ENCODE measurements at regions of chr6 and their contacts with region 1.

Region 1: GRCh38 chr6:168895102-168895812 is 358.4 kb downstream of the THBS2 start:
- DNase-seq: peak; percentile 93
- H3K4me3 ChIP-seq: no peak overlapping the region
- H3K27ac ChIP-seq: peak overlapping the region; percentile 36
- H3K4me1 ChIP-seq: no peaks in the 10 kb centered on the region
- H3K27me3 ChIP-seq: no peaks in the 10 kb centered on the region
- CTCF ChIP-seq: peak; percentile 85

Region 2: GRCh38 chr6:169529931-169530751 is 634.9 kb after region 1 on chr6:
- intact Hi-C with region 1: loop called (anchors 10 kb)
- DNase-seq: peak; percentile 23
- H3K4me3 ChIP-seq: no peak overlapping the region
- H3K27ac ChIP-seq: no peak overlapping the region
- H3K4me1 ChIP-seq: no peaks in the 10 kb centered on the region
- H3K27me3 ChIP-seq: no peaks in the 10 kb centered on the region
- CTCF ChIP-seq: no peak

Measured in colonic mucosa (tissue), 4 donors.